ENCODE measurements at regions of chrX and their contacts with region 1.

Region 1: DNA sequence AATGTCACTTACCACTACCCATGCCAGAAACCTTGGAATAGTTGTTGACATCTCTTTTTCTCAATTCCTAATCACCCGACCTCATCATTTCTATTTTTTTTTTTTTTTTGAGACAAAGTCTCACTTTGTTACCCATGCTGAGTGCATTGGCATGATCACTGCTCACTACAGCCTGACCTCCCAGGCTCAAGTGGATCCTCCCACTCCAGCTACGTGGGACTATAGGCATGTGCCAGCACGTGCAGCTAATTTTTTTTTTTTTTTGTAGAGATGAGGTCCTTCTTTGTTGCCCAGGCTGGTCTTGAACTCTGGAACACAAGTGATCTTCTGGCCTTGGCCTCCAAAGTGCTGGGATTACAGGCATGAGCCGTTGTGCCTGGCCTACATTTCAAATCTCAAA is 12.0 kb downstream of the KDM6A start:
- DNase-seq: no peak
- ATAC-seq: no peak
- H3K4me3 ChIP-seq: no peak overlapping the region
- H3K4me3 Mint-ChIP-seq: peak overlapping the region; percentile 2
- H3K27ac ChIP-seq: no peak overlapping the region
- H3K27ac Mint-ChIP-seq: peak overlapping the region in 1 of 2 donors; percentile 1
- H3K4me1 ChIP-seq: peaks cover 16% of the 10 kb centered on the region
- H3K4me1 Mint-ChIP-seq: peaks cover 24 to 64% of the 10 kb centered on the region in 2 donors
- H3K27me3 ChIP-seq: no peaks in the 10 kb centered on the region
- H3K27me3 Mint-ChIP-seq: no peaks in the 10 kb centered on the region
- CTCF ChIP-seq: no peak

Region 2: DNA sequence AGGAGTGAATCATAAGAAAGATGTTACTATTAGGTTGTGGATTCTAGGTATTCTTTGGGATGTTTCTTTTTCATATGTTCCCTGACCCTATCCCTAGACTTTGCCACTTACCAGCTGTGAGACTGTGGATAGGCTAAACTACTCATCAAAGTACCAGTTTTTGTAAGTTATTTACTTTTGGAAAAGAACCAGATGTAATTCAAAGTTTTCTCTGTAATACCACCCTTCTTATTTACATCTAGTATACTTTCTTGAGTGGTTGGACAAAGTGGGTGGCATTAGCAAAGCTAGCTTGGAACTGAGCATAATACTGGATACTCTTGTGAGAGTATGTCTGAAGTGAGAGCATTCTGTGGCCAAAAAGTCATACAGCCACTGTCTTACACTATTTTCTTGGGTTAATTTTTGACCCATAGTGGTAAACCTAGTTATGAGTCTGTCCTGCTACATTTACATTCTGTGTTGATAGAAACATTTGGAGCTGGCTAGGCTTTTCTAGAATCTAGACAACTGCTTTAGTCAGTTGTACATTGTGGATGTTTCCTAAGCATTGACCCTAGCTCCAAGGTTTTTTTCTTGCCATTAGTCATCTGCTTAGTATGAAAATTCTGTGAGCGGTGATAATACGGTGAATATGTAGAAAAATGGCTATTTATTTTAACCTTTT is 29.7 kb after region 1 on chrX:
- intact Hi-C with region 1: loop called (anchors 5 kb)
- DNase-seq: no peak
- ATAC-seq: peak in 1 of 3 donors; percentile 33
- H3K4me3 ChIP-seq: no peak overlapping the region
- H3K4me3 Mint-ChIP-seq: peak overlapping the region; percentile 66
- H3K27ac ChIP-seq: no peak overlapping the region
- H3K27ac Mint-ChIP-seq: peak overlapping the region; percentile 39 to 62
- H3K4me1 ChIP-seq: no peaks in the 10 kb centered on the region
- H3K4me1 Mint-ChIP-seq: peaks cover 38 to 61% of the 10 kb centered on the region in 2 donors
- H3K27me3 ChIP-seq: no peaks in the 10 kb centered on the region
- H3K27me3 Mint-ChIP-seq: no peaks in the 10 kb centered on the region
- CTCF ChIP-seq: no peak

Measured in natural killer cell (primary cell).